ENCODE measurements at regions of chr15 and their contacts with region 1.

Region 1: GRCh38 chr15:72585476-72586082 is 68.9 kb upstream of the GOLGA6B start:
- DNase-seq: no peak
- H3K4me3 ChIP-seq: no peak overlapping the region
- H3K27me3 ChIP-seq: no peaks in the 10 kb centered on the region
- CTCF ChIP-seq: peak; percentile 27

Region 2: DNA sequence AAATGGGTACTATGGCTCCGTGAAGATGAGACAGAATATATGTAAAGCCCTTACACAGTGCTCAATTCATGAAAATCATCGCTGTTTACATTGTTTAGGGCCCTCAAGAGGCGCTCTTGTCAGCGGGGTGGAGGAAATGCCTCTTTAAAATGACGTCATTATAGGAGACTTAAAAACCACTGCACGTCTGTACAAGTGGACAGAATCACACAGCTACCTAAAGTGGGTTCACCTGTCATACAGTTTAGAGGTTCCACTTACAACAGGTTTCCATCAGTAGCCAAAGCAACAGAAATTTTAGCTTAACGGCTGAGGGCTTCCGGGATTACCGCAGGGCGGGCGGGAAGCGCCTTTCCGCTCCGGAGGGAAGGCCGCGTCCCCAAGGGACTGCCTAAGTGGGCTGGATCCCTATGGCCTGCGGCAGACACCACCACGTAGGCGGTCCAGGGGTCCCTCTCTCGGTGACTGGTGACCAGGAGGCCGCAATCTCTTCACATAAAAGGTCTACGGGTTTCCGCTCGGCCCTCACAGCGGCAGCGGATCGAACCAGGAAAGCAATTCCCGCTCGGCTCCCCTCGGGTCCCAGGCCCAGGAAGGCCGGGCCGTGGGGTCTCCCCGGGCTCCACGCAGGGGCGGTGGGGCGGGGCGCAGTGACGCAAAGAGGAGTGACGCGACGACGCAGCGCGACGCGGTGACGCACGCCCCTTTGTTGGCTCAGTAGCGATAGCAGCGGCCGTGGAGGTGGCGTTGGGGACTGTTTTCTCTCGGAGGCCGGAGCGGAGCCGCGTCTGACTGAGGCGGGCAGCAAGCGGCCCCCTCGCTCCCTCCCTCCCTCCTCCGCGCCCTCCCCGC is 111.7 kb before region 1 on chr15 and contains the start of gene ARIH1:
- CTCF ChIA-PET with region 1: no interaction called
- POLR2A ChIA-PET with region 1: interaction called, 10 read pairs
- DNase-seq: peak; percentile 57
- H3K4me3 ChIP-seq: peak within 1 kb of the TSS; percentile 82
- H3K27me3 ChIP-seq: no peaks in the 10 kb centered on the region
- CTCF ChIP-seq: peak; percentile 47
- polyA plus RNA-seq, gene ARIH1: 46.0 and 60.6 TPM in 2 replicates

Region 3: DNA sequence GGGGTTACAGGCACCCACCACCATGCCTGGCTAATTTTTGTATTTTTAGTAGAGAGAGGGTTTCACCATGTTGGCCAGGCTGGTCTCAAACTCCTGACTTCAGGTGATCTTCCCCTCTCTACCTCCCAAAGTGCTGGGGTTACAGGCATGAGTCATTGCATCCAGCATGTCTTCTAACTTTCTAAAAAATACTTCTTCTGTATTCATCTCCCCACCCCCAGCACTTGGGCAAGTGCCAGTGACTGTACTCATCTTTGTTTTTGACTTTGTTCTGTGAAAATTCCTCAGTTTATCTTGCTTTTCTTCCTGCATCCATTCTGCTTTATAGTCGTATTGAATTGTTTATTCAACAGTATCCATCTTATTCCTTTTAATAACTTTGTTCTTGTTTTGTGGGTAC is 63.9 kb before region 1 on chr15:
- CTCF ChIA-PET with region 1: no interaction called
- POLR2A ChIA-PET with region 1: no interaction called
- DNase-seq: no peak
- H3K4me3 ChIP-seq: no peak overlapping the region
- H3K27me3 ChIP-seq: no peaks in the 10 kb centered on the region
- CTCF ChIP-seq: no peak

Region 4: DNA sequence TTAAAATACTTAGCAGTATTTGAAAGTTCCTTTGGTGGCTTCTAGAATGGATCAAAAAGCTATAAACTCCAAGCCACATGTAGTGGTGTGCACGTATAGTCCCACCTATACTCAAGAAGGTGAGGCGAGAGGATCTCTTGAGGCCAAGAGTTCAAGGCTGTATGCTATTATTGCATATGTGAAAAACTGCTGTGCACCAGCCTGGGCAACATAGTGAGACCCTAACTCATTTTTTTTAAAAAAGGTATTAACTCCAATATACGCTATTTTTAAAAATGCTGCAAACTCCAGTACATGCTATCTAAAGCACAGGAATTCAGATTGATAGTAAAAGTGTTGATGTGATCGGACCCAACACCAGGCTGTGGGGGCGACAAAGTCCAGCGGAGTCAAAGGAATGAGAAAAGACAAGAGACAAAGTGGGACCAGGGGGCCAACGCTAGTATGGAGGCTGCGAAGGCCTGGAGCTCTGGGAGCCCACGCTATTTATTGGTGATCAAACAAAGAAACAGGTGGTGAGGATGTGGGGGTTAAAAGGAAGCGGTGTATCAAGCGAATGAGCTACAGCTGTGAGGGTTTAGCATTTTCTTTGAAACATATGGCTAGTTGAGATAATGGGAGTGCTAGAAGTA is 44.9 kb before region 1 on chr15:
- CTCF ChIA-PET with region 1: no interaction called
- POLR2A ChIA-PET with region 1: interaction called, 10 read pairs
- DNase-seq: no peak
- H3K4me3 ChIP-seq: no peak overlapping the region
- H3K27me3 ChIP-seq: no peaks in the 10 kb centered on the region
- CTCF ChIP-seq: no peak

Region 5: GRCh38 chr15:72599855-72600464 is 14.4 kb after region 1 on chr15:
- CTCF ChIA-PET with region 1: interaction called, 22 read pairs
- POLR2A ChIA-PET with region 1: no interaction called
- DNase-seq: peak; percentile 4
- H3K4me3 ChIP-seq: no peak overlapping the region
- H3K27me3 ChIP-seq: no peaks in the 10 kb centered on the region
- CTCF ChIP-seq: peak; percentile 68

Measured in BJ (cell line).